Dendritic cell treated with granulocyte-macrophage colony-stimulating factor and Interleukin-4, amounts not matched to agents 40 ng/mL and 50 ng/mL, for 4 days (primary cell): ENCODE measurements at regions of chr19 and their contacts with region 1.

Region 1: GRCh38 chr19:11987405-11988281 is 22.8 kb downstream of the ZNF763 start:
- H3K4me3 Mint-ChIP-seq: peak overlapping the region; percentile 98
- H3K27ac Mint-ChIP-seq: peak overlapping the region; percentile 97
- H3K4me1 Mint-ChIP-seq: peaks cover 25% of the 10 kb centered on the region
- H3K27me3 Mint-ChIP-seq: peaks cover 2% of the 10 kb centered on the region

Region 2: DNA sequence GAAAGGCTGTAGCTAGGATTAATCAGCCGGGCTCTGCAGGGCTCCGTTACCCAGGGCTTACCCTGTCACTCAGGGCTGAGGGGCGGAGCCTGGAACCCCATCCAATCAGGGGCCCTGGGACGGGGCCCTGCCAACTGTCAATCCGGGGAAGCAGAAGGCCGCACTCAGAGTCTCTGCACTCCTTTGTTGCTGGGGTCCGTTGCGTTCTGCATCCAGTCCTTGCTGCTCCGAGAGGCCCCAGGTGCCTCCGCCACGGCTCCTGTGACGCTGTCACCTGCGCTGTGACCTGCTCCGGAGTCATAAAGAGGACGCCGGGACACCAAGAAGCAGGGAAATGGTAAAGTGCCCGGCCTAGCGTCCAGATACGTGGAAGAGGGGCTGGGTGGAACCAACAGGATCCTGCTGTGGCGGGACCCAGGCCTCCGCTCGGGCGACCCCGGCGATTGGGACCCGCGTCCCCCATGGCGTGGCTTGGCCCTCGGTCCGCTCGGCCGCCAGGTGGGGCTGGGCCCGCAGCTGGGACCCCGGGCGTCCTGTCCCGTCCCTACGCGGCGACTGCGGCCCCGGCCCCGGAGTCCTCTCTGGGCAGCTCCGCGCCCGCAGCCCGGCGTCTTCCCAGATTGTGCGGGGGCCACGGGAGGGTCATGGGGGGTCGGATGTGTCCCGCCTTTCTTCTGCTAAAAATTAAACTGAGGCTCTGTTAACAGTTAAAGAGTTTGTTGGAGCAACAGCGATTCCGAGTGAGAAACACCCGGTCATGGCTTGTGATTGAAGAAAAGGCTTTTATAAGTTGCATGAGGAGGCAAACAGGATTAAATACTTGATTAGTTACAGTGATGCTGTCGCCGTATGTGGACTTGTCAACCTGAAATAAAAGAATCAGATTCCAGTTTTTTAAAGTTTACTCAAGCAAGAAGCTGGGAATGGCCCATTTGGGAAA is 189.0 kb before region 1 on chr19 and contains the start of gene ZNF491:
- intact Hi-C with region 1: loop called (anchors 5 kb)
- H3K4me3 Mint-ChIP-seq: peak within 1 kb of the TSS; percentile 99
- H3K27ac Mint-ChIP-seq: peak within 1 kb of the TSS; percentile 74
- H3K4me1 Mint-ChIP-seq: peaks cover 14% of the 10 kb centered on the region
- H3K27me3 Mint-ChIP-seq: peaks cover 3% of the 10 kb centered on the region

Region 3: DNA sequence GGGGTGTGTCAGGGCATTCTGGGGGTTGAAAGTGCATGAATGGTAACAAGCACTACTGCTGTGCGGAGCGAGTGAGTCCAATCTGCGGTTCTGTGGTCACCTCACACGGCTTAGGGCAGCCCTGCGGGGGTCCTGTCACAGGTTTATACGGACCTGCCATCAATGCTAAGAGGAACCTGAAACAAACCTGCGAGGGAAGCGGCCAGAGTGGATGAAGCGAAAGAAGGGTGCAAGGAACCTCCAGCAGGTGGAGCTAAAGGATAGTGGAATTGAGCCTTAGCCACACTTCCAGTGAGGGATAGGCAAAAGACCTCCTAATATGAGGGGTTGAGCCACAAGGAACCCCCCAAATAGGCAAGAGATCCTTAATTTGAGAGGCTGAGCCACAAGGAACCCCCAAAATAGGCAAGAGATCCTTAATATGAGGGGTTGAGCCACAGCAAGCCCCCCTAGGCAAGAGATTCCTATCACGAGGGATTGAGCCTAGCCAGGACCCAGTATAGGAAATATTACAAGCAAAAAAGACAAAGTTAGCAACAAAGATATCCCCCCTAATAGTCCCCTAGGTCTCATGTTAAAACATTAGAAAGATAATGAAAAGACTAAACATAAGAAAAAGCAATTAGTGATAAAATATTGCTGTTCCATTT is 106.4 kb before region 1 on chr19:
- intact Hi-C with region 1: loop called (anchors 5 kb)
- H3K4me3 Mint-ChIP-seq: no peak overlapping the region
- H3K27ac Mint-ChIP-seq: no peak overlapping the region
- H3K4me1 Mint-ChIP-seq: no peaks in the 10 kb centered on the region
- H3K27me3 Mint-ChIP-seq: peaks cover 6% of the 10 kb centered on the region

Region 4: DNA sequence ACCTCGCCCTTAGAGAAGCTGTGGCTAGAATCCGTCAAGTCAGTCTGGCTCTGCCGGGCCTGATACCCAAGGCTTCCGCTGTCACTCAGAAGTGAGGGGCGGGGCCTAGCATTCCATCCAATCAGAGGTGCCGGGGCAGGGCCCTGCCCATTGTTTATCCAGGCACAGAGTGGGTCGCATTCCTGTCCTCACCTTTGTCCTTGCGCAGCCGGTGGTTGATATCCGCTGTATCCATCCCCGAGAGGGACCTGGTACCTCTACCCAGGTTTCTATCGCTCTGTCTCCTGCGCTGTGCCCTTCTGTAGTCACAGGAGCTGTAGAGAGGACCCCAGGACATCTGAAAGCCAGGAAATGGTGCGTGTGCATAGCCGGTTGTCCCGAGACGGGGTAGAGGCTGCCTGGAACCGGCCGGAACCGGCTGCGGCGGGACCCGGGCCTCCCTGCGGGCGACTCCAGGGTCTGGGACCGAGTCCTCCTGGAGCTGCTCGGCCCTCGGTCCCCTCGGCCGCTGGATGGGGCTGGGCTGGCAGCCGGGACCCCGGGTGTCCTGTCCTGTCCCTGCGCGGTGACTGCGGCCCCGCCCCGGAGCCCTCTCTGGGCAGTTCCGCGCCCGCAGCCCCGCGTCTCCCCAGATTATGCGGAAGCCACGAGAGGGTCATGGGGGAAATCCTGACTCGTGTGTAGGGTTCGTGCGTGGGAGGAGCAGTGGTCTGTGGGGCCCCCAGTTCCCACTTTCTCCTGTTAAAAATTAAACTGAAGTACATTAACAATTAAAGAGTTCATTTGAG is 22.6 kb before region 1 on chr19 and contains the start of gene ZNF763:
- intact Hi-C with region 1: loop called (anchors 1 kb)
- H3K4me3 Mint-ChIP-seq: peak within 1 kb of the TSS; percentile 93
- H3K27ac Mint-ChIP-seq: peak within 1 kb of the TSS; percentile 92
- H3K4me1 Mint-ChIP-seq: peaks cover 42% of the 10 kb centered on the region
- H3K27me3 Mint-ChIP-seq: no peaks in the 10 kb centered on the region

Region 5: DNA sequence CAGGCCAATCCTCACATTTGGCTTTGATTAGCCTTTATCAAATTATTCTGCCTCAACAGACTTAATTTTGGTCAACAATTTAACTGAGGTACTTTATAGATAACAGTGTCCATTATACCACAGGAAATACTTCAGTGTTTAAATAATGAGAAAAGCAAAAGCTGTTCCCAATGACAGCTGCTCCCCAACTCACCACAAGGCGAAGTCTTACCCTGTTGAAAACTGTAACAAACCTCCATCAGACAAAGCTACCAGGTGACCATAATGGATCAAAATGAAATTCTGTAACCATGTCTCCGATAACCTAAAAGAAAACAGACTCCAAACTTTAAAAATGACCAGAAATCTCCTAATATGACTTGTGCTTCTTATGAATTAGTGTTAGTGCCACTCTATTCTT is 256.7 kb after region 1 on chr19:
- intact Hi-C with region 1: no loop called
- H3K4me3 Mint-ChIP-seq: no peak overlapping the region
- H3K27ac Mint-ChIP-seq: no peak overlapping the region
- H3K4me1 Mint-ChIP-seq: no peaks in the 10 kb centered on the region
- H3K27me3 Mint-ChIP-seq: no peaks in the 10 kb centered on the region